ENCODE measurements at regions of chr2 and their contacts with region 1.

Region 1: GRCh38 chr2:26456440-26457250 is 21.3 kb downstream of the OTOF start:
- DNase-seq: peak; percentile 82
- ATAC-seq: peak; percentile 85
- H3K4me3 ChIP-seq: peak overlapping the region; percentile 46 to 76 (median 50)
- H3K27ac ChIP-seq: peak overlapping the region; percentile 69
- H3K4me1 ChIP-seq: peaks cover 43% of the 10 kb centered on the region
- H3K27me3 ChIP-seq: no peaks in the 10 kb centered on the region; a peak in 1 of 5 replicates
- CTCF ChIP-seq: 0 out of 2 replicates have a peak, but pooled peaks have one; percentile 2
- EP300 ChIP-seq: peak; percentile 49 to 67; a peak in 2 of 4 replicates
- POLR2A ChIP-seq: peak in 1 of 2 experiments; percentile 29; a peak in 1 of 4 replicates
- RAD21 ChIP-seq: no peak

Region 2: DNA sequence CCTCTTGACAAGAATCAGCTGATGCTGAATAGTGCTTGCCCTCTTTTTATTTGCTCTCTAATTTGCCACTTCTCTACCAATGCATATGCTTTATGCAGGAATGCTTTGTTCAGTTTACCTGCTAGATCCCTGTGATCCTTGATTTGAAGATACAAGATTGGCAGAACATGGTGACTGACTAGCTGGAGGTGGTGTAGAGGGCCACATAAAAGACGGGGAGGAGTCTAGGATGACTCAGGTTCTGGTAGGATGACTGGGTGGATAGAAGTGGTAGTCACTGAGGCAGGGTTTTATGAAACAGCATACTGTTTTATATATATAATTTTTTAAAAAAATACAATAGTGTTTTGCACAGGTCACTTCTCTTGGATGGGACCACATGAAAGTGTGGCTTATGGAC is 103.8 kb before region 1 on chr2:
- CTCF ChIA-PET with region 1: no interaction called
- POLR2A ChIA-PET with region 1: no interaction called
- in situ Hi-C with region 1: no loop called
- intact Hi-C with region 1: no loop called
- DNase-seq: no peak
- ATAC-seq: no peak
- H3K4me3 ChIP-seq: no peak overlapping the region
- H3K27ac ChIP-seq: no peak overlapping the region
- H3K4me1 ChIP-seq: peaks cover 42% of the 10 kb centered on the region
- H3K27me3 ChIP-seq: no peaks in the 10 kb centered on the region
- CTCF ChIP-seq: no peak
- EP300 ChIP-seq: no peak
- POLR2A ChIP-seq: no peak
- RAD21 ChIP-seq: no peak

Region 3: DNA sequence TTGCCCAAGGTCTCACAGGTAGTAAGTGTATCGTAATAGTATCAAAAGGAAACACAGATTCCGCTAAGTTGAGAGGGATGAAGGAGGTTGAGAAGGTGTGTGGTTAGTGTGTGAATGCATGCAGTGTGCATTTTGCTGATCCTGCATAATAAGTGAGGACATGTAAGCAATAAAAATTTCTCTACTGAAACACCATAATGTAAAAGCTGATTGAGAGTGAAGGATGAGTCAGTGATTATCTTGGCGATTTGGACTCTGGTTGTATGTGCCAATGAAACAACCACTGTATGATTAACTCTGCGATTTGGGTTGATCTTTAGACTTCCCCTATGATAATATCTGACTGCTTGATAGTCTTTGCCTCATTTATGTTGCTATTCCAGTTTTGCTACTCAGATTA is 93.3 kb before region 1 on chr2:
- CTCF ChIA-PET with region 1: no interaction called
- POLR2A ChIA-PET with region 1: no interaction called
- in situ Hi-C with region 1: no loop called
- intact Hi-C with region 1: no loop called
- DNase-seq: peak; percentile 64
- ATAC-seq: peak; percentile 82
- H3K4me3 ChIP-seq: no peak overlapping the region
- H3K27ac ChIP-seq: peak overlapping the region; percentile 13
- H3K4me1 ChIP-seq: peaks cover 32% of the 10 kb centered on the region
- H3K27me3 ChIP-seq: no peaks in the 10 kb centered on the region
- CTCF ChIP-seq: no peak
- EP300 ChIP-seq: no peak
- POLR2A ChIP-seq: no peak
- RAD21 ChIP-seq: no peak

Region 4: DNA sequence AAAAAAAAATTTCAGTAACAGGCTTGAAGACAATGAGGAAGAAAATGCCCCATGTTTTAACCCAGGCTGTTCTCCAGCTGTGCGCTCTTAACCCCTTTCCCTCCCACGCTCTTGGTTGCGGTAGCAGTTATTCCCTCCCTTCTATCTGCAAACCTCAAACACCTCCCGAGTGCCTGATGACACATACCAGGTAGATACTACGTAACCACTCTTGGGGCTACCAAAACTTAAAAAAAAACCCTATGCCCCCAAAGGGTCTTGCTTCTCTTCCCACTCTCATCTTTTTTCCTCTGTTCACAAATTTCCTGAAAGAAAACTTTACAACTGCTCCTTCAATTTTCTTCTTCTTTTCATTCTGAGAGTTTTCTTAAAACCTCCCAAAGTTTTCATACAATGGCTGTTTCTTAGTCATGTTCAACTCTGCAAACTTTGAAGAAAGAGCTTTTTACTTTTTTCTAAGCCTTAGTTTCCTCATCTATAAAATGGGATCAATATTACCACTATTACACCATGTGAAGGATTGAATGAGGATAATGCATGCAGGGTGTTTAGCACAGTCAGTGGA is 59.8 kb before region 1 on chr2:
- CTCF ChIA-PET with region 1: no interaction called
- POLR2A ChIA-PET with region 1: no interaction called
- in situ Hi-C with region 1: no loop called
- intact Hi-C with region 1: loop called (anchors 5 kb)
- DNase-seq: no peak
- ATAC-seq: no peak
- H3K4me3 ChIP-seq: no peak overlapping the region
- H3K27ac ChIP-seq: no peak overlapping the region
- H3K4me1 ChIP-seq: no peaks in the 10 kb centered on the region
- H3K27me3 ChIP-seq: no peaks in the 10 kb centered on the region
- CTCF ChIP-seq: no peak
- EP300 ChIP-seq: no peak
- POLR2A ChIP-seq: no peak
- RAD21 ChIP-seq: no peak

Region 5: DNA sequence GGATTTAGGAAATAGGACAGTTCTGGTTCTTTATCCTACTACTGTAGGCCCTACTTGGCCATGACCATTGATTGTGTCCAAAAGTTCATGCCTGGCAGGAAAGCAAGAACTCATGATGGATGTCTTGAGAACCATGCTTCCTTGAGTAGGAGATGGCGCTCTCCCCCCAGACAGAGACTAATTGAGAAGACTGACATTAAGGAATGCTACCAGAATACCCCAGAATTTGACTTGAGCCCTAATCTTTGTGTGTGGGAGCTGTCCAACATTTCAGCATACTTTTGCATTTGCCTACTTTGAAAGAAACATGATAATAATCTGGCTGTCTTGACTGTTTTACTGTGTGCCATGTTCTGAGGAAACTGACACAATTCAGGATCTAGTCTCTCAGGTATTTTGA is 537.1 kb after region 1 on chr2:
- CTCF ChIA-PET with region 1: no interaction called
- POLR2A ChIA-PET with region 1: no interaction called
- in situ Hi-C with region 1: no loop called
- intact Hi-C with region 1: no loop called
- DNase-seq: no peak
- ATAC-seq: no peak
- H3K4me3 ChIP-seq: no peak overlapping the region
- H3K27ac ChIP-seq: no peak overlapping the region
- H3K4me1 ChIP-seq: peaks cover 9% of the 10 kb centered on the region
- H3K27me3 ChIP-seq: peaks cover 0 to 18% of the 10 kb centered on the region in 2 experiments; a peak in 1 of 5 replicates
- CTCF ChIP-seq: no peak
- EP300 ChIP-seq: no peak
- POLR2A ChIP-seq: no peak
- RAD21 ChIP-seq: no peak